ENCODE measurements at regions of chr5 and their contacts with region 1.

Region 1: GRCh38 chr5:61162010-61162831 is at the start of gene SMIM15:
- DNase-seq: peak; percentile 93
- H3K4me3 ChIP-seq: peak within 1 kb of the TSS; percentile 74 to 87 (median 77)
- H3K27ac ChIP-seq: peak within 1 kb of the TSS; percentile 85 to 90 (median 88)
- H3K4me1 ChIP-seq: peaks cover 0 to 35% (median 16%) of the 10 kb centered on the region in 4 donors
- H3K27me3 ChIP-seq: no peaks in the 10 kb centered on the region
- CTCF ChIP-seq: peak in 1 of 4 experiments; percentile 9
- EP300 ChIP-seq: no peak
- POLR2A ChIP-seq: peak; percentile 40 to 49
- total RNA-seq, gene SMIM15: 12.2 to 35.0 (median 21.2) TPM

Region 2: DNA sequence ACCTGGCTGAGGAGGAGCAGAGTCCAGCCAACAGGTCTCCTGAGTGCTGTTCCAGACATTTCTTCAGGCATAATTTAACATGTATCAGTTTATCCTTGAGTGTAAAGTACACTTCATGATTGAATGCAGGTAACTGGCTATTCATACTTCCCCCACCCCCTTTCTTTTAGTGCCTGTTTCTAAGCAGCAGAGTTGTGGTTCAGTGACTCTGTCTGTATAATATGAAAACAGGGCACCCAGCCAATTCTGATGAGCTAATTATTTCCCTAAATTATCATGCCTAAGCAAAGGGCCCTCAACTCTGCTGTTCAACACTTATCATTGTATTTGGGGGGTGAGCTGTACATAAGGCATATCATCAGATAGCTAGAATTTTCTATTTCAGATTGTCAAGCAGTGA is 118.0 kb after region 1 on chr5:
- intact Hi-C with region 1: loop called (anchors 5 kb)
- DNase-seq: no peak
- H3K4me3 ChIP-seq: no peak overlapping the region
- H3K27ac ChIP-seq: peak overlapping the region in 1 of 4 donors; percentile 47
- H3K4me1 ChIP-seq: peaks cover 0 to 25% (median 19%) of the 10 kb centered on the region in 4 donors
- H3K27me3 ChIP-seq: no peaks in the 10 kb centered on the region
- CTCF ChIP-seq: no peak
- EP300 ChIP-seq: no peak
- POLR2A ChIP-seq: no peak

Region 3: DNA sequence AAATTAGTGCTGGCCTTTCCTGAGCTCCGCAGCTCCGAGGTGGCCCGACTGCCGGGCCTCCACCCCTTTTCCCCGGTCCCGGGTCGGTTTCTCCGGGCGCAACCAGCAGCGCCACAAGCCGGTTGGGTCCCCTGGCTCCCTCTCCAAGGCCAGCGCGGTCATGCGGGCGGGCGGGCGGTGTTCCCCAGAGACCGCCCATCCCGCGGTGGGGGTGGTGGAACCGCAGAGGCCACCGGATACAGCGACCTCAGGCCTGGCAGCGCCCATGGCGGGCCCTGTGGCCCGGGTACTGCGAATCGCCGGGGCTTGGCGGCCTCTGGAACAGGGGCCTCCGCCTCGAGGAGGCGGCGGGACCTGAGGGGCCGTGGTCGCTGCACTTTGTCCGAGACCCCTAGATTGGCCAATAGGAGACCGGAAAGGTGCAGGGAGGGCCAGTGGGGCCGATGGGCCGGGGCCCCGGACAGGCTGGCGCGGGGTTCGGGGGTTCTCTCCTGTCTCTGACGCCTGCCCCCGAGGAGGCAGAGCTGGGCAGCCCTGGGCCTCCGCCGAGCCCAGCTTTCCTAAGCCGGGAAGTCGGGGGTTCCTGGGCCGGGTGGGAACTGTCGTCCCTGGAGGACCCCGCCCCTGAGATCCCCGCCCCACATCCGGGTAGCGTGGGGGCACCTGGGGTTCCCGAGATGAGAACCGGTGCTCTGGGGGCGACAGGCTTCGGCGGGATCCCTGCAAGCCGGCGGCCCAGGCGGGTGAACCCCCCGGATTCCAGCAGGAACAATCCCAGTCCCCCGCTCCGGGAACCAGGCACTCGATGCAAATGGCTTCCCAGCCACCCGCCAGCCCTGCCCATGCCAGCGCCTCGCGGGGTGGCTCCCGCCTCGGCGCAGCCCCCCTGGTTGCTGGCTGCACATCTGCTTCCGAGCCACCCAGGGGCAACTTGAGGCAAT is 463.7 kb after region 1 on chr5:
- intact Hi-C with region 1: loop called (anchors 5 kb)
- DNase-seq: peak; percentile 89
- H3K4me3 ChIP-seq: peak overlapping the region; percentile 45 to 82 (median 69)
- H3K27ac ChIP-seq: peak overlapping the region; percentile 81 to 93 (median 84)
- H3K4me1 ChIP-seq: peaks cover 0 to 27% (median 16%) of the 10 kb centered on the region in 4 donors
- H3K27me3 ChIP-seq: no peaks in the 10 kb centered on the region
- CTCF ChIP-seq: no peak
- EP300 ChIP-seq: peak in 1 of 4 donors; percentile 13
- POLR2A ChIP-seq: peak in 1 of 2 donors; percentile 13

Region 4: GRCh38 chr5:61658592-61659008 is 496.4 kb after region 1 on chr5:
- intact Hi-C with region 1: loop called (anchors 10 kb)
- DNase-seq: peak; percentile 88
- H3K4me3 ChIP-seq: no peak overlapping the region
- H3K27ac ChIP-seq: no peak overlapping the region
- H3K4me1 ChIP-seq: no peaks in the 10 kb centered on the region
- H3K27me3 ChIP-seq: no peaks in the 10 kb centered on the region
- CTCF ChIP-seq: peak; percentile 71 to 91 (median 89)
- EP300 ChIP-seq: no peak
- POLR2A ChIP-seq: no peak

Region 5: GRCh38 chr5:61933787-61934626 is 771.8 kb after region 1 on chr5:
- intact Hi-C with region 1: loop called (anchors 10 kb)
- DNase-seq: no peak
- H3K4me3 ChIP-seq: no peak overlapping the region
- H3K27ac ChIP-seq: no peak overlapping the region
- H3K4me1 ChIP-seq: peaks cover 0 to 9% (median 1%) of the 10 kb centered on the region in 4 donors
- H3K27me3 ChIP-seq: no peaks in the 10 kb centered on the region
- CTCF ChIP-seq: peak; percentile 53 to 74 (median 62)
- EP300 ChIP-seq: no peak
- POLR2A ChIP-seq: no peak